ENCODE measurements at regions of chr9 and their contacts with region 1.

Region 1: DNA sequence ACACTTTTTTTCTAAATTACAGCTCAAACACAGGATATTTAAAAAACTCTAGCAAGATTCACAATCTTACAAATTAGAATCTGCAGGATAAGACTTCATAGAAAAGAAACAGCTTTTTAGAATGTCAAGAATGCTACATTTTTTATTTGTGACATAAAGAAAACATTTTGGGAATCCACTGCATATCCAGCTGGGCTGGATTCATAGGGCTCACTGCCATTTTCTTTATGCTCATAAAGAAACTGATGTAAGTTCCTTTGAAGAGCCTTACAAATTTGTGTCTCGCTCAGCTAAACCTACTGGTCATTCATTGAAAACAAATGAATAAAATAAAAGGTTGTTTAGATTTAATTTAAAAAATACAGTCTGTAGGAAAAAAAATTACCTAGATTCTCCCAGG is 332.3 kb downstream of the TRPM3 start:
- DNase-seq: no peak
- ATAC-seq: no peak
- H3K4me3 ChIP-seq: no peak overlapping the region
- H3K27ac ChIP-seq: no peak overlapping the region
- H3K4me1 ChIP-seq: no peaks in the 10 kb centered on the region
- H3K27me3 ChIP-seq: no peaks in the 10 kb centered on the region; the same call in 1 of the 2 replicates
- CTCF ChIP-seq: no peak
- POLR2A ChIP-seq: no peak
- RAD21 ChIP-seq: no peak

Region 2: GRCh38 chr9:70987986-70988385 is 198.9 kb after region 1 on chr9:
- CTCF ChIA-PET with region 1: no interaction called
- POLR2A ChIA-PET with region 1: no interaction called
- dilution Hi-C with region 1: no loop called
- in situ Hi-C with region 1: no loop called
- intact Hi-C with region 1: no loop called
- DNase-seq: peak; percentile 72
- ATAC-seq: peak; percentile 67
- H3K4me3 ChIP-seq: no peak overlapping the region
- H3K27ac ChIP-seq: peak overlapping the region; percentile 63; the same call in 1 of the 2 replicates
- H3K4me1 ChIP-seq: peaks cover 3% of the 10 kb centered on the region
- H3K27me3 ChIP-seq: no peaks in the 10 kb centered on the region; the same call in 1 of the 2 replicates
- CTCF ChIP-seq: no peak
- POLR2A ChIP-seq: no peak
- RAD21 ChIP-seq: no peak

Region 3: GRCh38 chr9:71010258-71010657 is 221.2 kb after region 1 on chr9:
- CTCF ChIA-PET with region 1: no interaction called
- POLR2A ChIA-PET with region 1: no interaction called
- dilution Hi-C with region 1: no loop called
- in situ Hi-C with region 1: no loop called
- intact Hi-C with region 1: loop called (anchors 10 kb)
- DNase-seq: no peak
- ATAC-seq: no peak
- H3K4me3 ChIP-seq: no peak overlapping the region
- H3K27ac ChIP-seq: no peak overlapping the region
- H3K4me1 ChIP-seq: no peaks in the 10 kb centered on the region
- H3K27me3 ChIP-seq: no peaks in the 10 kb centered on the region; the same call in 1 of the 2 replicates
- CTCF ChIP-seq: no peak
- POLR2A ChIP-seq: no peak
- RAD21 ChIP-seq: no peak

Region 4: DNA sequence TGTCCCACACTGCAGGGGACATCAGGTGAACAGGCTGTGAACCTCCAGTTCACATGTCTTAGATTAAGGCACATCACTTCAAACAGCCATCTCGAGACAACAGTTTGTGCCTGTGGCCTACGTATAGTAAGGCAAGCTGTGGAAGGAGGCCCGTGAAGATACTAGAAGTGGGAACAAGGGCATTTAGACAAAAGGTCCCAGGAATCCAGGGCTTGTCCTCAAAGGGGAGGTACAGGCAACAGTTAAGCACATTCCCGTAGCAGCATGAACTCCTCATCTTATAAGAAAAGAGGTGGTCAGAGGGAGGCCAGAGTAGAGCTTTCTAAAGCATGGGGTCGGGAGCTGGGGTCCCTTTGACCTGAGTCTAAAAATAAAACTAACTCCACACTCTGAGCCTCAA is 454.9 kb after region 1 on chr9:
- CTCF ChIA-PET with region 1: no interaction called
- POLR2A ChIA-PET with region 1: no interaction called
- dilution Hi-C with region 1: no loop called
- in situ Hi-C with region 1: no loop called
- intact Hi-C with region 1: loop called (anchors 5 kb)
- DNase-seq: no peak
- ATAC-seq: no peak
- H3K4me3 ChIP-seq: no peak overlapping the region
- H3K27ac ChIP-seq: no peak overlapping the region
- H3K4me1 ChIP-seq: no peaks in the 10 kb centered on the region
- H3K27me3 ChIP-seq: no peaks in the 10 kb centered on the region
- CTCF ChIP-seq: no peak
- POLR2A ChIP-seq: no peak
- RAD21 ChIP-seq: no peak

Measured in IMR-90 (cell line).